T-cell (primary cell): ENCODE measurements at regions of chr19 and their contacts with region 1.

Region 1: DNA sequence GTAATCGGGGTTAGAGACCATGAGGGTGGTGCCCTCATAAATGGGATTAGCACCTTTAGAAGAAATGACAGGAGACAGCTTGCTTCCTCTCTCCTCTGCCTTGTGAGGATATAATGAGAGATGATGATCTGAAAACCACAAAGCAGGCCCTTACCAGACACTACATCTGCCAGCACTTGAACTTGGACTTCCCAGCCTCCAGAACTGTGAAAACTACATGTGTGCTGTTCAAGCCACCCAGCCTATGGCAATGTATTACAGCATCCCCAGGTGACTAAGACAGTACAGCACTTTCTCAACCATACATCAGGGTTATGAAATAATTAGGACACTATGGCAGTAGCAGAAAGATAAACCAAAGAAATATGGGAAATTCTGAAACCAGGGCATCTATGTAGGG is 7.4 kb downstream of the ZNF564 start:
- DNase-seq: no peak
- ATAC-seq: no peak
- H3K4me3 ChIP-seq: no peak overlapping the region
- H3K4me3 Mint-ChIP-seq: no peak overlapping the region
- H3K27ac ChIP-seq: no peak overlapping the region
- H3K27ac Mint-ChIP-seq: peak overlapping the region in 1 of 2 donors; percentile 9
- H3K4me1 ChIP-seq: peaks cover 0 to 18% of the 10 kb centered on the region in 2 experiments
- H3K4me1 Mint-ChIP-seq: peaks cover 44 to 49% (median 45%) of the 10 kb centered on the region in 3 donors
- H3K27me3 ChIP-seq: no peaks in the 10 kb centered on the region
- H3K27me3 Mint-ChIP-seq: no peaks in the 10 kb centered on the region

Region 2: GRCh38 chr19:10929402-10929794 is 1614.5 kb before region 1 on chr19:
- CTCF ChIA-PET with region 1: no interaction called
- POLR2A ChIA-PET with region 1: interaction called in 1 of 2 experiments, 12 read pairs
- DNase-seq: no peak
- ATAC-seq: no peak
- H3K4me3 ChIP-seq: peak overlapping the region; percentile 58 to 79
- H3K4me3 Mint-ChIP-seq: peak overlapping the region; percentile 90 to 92 (median 91)
- H3K27ac ChIP-seq: no peak overlapping the region
- H3K27ac Mint-ChIP-seq: no peak overlapping the region
- H3K4me1 ChIP-seq: peaks cover 13 to 36% of the 10 kb centered on the region in 2 experiments
- H3K4me1 Mint-ChIP-seq: peaks cover 17 to 31% (median 27%) of the 10 kb centered on the region in 3 donors
- H3K27me3 ChIP-seq: no peaks in the 10 kb centered on the region
- H3K27me3 Mint-ChIP-seq: no peaks in the 10 kb centered on the region

Region 3: GRCh38 chr19:12656899-12657571 is 113.2 kb after region 1 on chr19:
- CTCF ChIA-PET with region 1: no interaction called
- POLR2A ChIA-PET with region 1: no interaction called
- DNase-seq: no peak
- ATAC-seq: no peak
- H3K4me3 ChIP-seq: no peak overlapping the region
- H3K4me3 Mint-ChIP-seq: no peak overlapping the region
- H3K27ac ChIP-seq: no peak overlapping the region
- H3K27ac Mint-ChIP-seq: no peak overlapping the region
- H3K4me1 ChIP-seq: no peaks in the 10 kb centered on the region
- H3K4me1 Mint-ChIP-seq: peaks cover 0 to 5% (median 0%) of the 10 kb centered on the region in 3 donors
- H3K27me3 ChIP-seq: no peaks in the 10 kb centered on the region
- H3K27me3 Mint-ChIP-seq: no peaks in the 10 kb centered on the region